ENCODE measurements at regions of chr20 and their contacts with region 1.

Region 1: DNA sequence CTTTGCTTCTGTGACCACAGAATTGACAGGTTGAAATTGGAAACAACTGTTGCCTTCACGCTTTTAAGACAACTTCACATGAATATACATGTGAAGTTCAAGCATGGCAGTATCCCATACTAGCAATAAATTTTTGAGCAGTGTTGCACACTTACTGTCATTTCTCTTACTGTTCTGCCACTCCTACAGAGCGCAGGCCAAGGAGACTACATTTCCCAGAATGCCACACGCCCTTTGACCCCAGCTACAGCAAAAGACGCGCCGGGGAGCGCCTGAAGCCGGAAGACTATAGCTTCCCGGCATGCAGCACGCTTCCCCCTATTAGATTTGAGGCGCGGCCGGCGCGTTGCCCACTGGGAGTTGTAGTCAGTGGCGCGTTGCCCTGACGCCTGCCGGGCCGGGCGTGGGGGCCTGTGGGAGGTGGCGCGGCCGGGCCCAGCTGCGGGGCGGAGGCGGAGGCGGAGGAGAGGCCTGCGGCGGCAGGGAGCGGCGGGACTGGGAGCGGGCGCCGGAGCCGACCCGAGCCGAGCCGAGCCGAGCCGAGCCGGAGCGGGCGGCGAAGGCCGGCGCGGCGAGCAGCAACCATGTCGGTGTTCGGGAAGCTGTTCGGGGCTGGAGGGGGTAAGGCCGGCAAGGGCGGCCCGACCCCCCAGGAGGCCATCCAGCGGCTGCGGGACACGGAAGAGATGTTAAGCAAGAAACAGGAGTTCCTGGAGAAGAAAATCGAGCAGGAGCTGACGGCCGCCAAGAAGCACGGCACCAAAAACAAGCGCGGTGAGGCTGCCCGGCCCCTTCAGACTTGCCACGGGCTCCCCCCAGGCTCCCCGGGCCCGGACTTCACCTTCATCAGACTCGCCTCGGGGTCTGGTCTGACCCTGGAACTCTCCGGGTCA is at the start of gene CHMP4B:
- DNase-seq: peak; percentile 100
- H3K4me3 ChIP-seq: peak within 1 kb of the TSS; percentile 49
- H3K4me3 Mint-ChIP-seq: peak within 1 kb of the TSS; percentile 97
- H3K27ac Mint-ChIP-seq: peak within 1 kb of the TSS; percentile 96
- H3K4me1 ChIP-seq: peaks cover 34% of the 10 kb centered on the region
- H3K4me1 Mint-ChIP-seq: peaks cover 28% of the 10 kb centered on the region
- H3K27me3 ChIP-seq: no peaks in the 10 kb centered on the region
- H3K27me3 Mint-ChIP-seq: no peaks in the 10 kb centered on the region
- CTCF ChIP-seq: no peak
- total RNA-seq, gene CHMP4B: 190 and 203 TPM in 2 replicates

Region 2: DNA sequence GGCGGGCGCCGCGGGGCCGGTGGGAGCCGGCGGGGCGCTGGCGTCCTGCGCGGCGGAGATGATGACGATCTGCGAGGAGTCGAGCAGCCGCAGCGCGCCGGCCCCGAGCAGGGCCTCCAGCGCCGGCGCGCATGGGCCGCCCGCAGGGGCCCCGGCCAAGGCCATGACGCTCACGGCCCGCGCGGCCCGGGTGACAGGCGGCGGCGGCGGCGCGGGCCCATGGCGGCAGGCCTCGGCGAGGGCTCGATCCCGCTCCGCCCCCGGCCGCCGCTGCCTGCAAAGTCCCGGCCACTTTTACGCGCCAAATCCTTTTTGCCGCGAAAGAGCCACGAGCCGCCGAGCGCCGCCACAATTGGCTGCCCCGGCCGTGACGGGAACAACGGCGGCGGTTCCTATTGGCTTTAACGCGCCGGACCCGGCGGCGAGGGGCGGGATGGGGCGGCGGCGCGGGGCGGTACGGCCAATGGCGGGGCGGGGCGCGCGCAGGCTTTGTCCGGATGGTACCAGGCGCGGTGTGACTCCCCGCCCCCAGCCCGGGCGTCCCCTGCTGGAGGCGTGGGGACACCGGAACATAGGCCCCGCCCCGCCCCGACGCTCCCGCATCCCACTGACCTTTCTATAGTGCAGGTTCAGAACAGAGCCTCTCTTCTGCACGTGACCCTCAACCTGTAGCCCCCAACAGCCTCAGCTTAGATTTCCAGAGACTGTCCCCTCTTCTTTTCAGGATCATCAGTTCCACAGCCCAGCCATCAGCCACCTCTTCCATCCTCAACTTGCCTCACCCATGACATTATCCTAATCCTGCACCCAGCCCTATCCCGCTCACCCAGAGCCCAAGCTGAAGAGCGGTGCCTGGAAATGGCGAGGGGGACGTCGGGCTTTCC is 124.8 kb before region 1 on chr20 and contains the start of gene E2F1:
- CTCF ChIA-PET with region 1: no interaction called
- POLR2A ChIA-PET with region 1: no interaction called
- intact Hi-C with region 1: loop called (anchors 5 kb)
- DNase-seq: peak; percentile 99 to 100
- H3K4me3 ChIP-seq: peak within 1 kb of the TSS; percentile 80
- H3K4me3 Mint-ChIP-seq: peak within 1 kb of the TSS; percentile 68
- H3K27ac Mint-ChIP-seq: peak within 1 kb of the TSS; percentile 78
- H3K4me1 ChIP-seq: peaks cover 46% of the 10 kb centered on the region
- H3K4me1 Mint-ChIP-seq: peaks cover 59% of the 10 kb centered on the region
- H3K27me3 ChIP-seq: no peaks in the 10 kb centered on the region
- H3K27me3 Mint-ChIP-seq: no peaks in the 10 kb centered on the region
- CTCF ChIP-seq: peak; percentile 56 to 64
- total RNA-seq, gene E2F1: 67.5 and 74.7 TPM in 2 replicates

Region 3: GRCh38 chr20:33791959-33792597 is 19.1 kb before region 1 on chr20:
- CTCF ChIA-PET with region 1: interaction called, 11 read pairs
- POLR2A ChIA-PET with region 1: interaction called, 7 read pairs
- intact Hi-C with region 1: loop called (anchors 1 kb)
- DNase-seq: peak in 1 of 2 experiments; percentile 77
- H3K4me3 ChIP-seq: no peak overlapping the region
- H3K4me3 Mint-ChIP-seq: no peak overlapping the region
- H3K27ac Mint-ChIP-seq: no peak overlapping the region
- H3K4me1 ChIP-seq: peaks cover 17% of the 10 kb centered on the region
- H3K4me1 Mint-ChIP-seq: peaks cover 18% of the 10 kb centered on the region
- H3K27me3 ChIP-seq: no peaks in the 10 kb centered on the region
- H3K27me3 Mint-ChIP-seq: no peaks in the 10 kb centered on the region
- CTCF ChIP-seq: peak; percentile 90 to 99

Region 4: DNA sequence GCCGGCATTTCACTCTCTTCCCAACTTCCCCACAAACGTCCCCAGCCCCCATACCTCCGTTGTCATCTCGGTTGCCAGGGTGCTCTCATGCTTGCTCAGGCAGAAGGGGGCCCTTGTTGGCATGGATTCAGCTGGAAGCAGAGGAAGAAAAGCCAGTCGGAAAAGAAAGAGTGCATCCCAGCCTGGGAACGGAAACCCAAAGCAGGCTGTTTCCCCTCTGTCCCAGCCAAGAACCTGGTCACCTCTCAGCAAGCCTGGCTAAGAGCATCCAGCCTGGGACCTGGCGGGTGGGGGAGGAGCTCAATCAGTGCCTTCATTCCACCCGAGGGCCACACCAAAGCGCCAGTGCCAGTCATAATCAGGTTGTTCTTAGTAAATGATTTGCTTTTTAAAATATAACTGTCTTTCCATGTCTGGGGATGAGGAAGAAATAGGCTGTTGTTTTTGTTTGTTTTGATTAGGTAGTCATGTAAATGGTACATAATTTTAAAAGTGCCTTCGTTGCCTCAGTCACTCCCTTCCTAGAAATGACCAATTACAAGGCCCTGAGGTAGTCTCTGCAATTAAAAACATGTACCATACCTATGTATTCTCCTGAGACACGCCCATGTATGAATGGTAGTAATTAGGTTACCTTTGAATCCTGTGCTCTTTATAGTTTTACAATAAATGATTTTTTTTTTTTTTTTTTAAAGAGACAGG is 21.1 kb after region 1 on chr20:
- CTCF ChIA-PET with region 1: no interaction called
- POLR2A ChIA-PET with region 1: interaction called, 11 read pairs
- intact Hi-C with region 1: loop called (anchors 2 kb)
- DNase-seq: no peak
- H3K4me3 ChIP-seq: no peak overlapping the region
- H3K4me3 Mint-ChIP-seq: no peak overlapping the region
- H3K27ac Mint-ChIP-seq: no peak overlapping the region
- H3K4me1 ChIP-seq: peaks cover 23% of the 10 kb centered on the region
- H3K4me1 Mint-ChIP-seq: peaks cover 51% of the 10 kb centered on the region
- H3K27me3 ChIP-seq: no peaks in the 10 kb centered on the region
- H3K27me3 Mint-ChIP-seq: no peaks in the 10 kb centered on the region
- CTCF ChIP-seq: no peak

Region 5: DNA sequence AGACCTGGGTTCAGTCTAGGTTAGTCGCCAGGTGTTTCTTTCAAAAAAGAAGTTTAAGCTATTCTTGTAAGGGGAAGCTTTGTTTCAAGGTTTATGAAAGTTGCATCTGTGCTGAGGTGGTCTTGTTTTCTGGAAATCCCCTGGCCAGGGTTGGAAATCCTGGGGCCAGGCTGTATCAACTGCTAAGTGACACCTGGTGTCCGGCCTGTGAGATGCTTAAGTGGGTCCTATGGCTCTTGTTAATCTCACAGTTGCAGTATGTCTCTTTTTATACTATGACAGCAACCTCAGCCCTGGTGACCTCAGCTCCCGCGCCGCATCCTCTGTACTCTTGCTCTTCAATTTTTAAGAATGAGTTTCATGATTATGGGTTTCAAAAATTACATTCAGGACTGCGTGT is 72.0 kb after region 1 on chr20:
- CTCF ChIA-PET with region 1: no interaction called
- POLR2A ChIA-PET with region 1: no interaction called
- intact Hi-C with region 1: no loop called
- DNase-seq: no peak
- H3K4me3 ChIP-seq: no peak overlapping the region
- H3K4me3 Mint-ChIP-seq: no peak overlapping the region
- H3K27ac Mint-ChIP-seq: no peak overlapping the region
- H3K4me1 ChIP-seq: peaks cover 7% of the 10 kb centered on the region; the same call in 1 of the 2 replicates
- H3K4me1 Mint-ChIP-seq: peaks cover 9% of the 10 kb centered on the region
- H3K27me3 ChIP-seq: no peaks in the 10 kb centered on the region
- H3K27me3 Mint-ChIP-seq: peaks cover 2% of the 10 kb centered on the region
- CTCF ChIP-seq: no peak

Measured in Caco-2 (cell line).